ENCODE measurements at regions of chr6 and their contacts with region 1.

Region 1: DNA sequence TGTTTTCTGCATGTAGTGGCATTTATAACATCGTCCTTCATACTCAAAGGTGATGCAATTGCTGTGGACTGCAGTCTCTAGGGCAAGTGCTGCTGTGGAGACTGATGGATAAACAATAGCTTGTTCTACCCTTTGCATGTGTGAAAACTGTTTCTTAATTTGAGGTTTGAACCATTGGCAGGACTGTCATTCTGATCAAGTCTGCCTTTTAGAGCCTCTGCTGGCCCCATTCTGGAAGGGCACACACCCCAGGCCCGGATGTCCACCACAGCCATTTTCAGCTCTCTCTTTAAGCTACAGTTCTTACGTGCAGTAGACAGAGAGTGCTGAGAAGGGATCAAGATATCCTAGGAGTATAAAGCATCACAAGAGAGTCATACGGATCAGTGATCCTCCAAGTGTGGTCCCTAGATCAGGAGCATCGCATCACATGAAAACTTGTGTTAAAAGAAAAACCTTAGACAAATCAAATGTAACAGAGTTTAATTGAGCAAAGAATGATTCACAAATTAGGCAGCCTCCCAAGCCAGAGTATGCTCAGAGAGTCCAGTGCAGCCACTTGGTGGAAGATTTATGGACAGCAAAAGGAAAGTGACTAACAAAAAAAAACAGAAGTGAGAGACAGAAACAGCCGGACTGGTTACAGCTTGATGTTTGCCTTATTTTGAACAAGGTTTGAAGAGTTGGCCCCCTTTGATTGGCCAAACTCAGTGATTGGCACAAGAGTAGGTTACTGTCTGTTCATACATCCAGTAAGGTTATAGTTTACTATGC is 52.0 kb downstream of the FRK start:
- DNase-seq: no peak
- ATAC-seq: peak; percentile 45
- H3K4me3 ChIP-seq: no peak overlapping the region
- H3K27ac ChIP-seq: peak overlapping the region in 1 of 4 donors; percentile 27
- H3K4me1 ChIP-seq: peaks cover 18% of the 10 kb centered on the region
- H3K27me3 ChIP-seq: no peaks in the 10 kb centered on the region
- CTCF ChIP-seq: no peak
- POLR2A ChIP-seq: no peak

Region 2: GRCh38 chr6:115945306-115945705 is 63.4 kb before region 1 on chr6:
- intact Hi-C with region 1: no loop called
- DNase-seq: no peak
- ATAC-seq: no peak
- H3K4me3 ChIP-seq: no peak overlapping the region
- H3K27ac ChIP-seq: no peak overlapping the region
- H3K4me1 ChIP-seq: no peaks in the 10 kb centered on the region
- H3K27me3 ChIP-seq: no peaks in the 10 kb centered on the region
- CTCF ChIP-seq: no peak
- POLR2A ChIP-seq: no peak

Region 3: GRCh38 chr6:116096979-116097816 is 88.5 kb after region 1 on chr6:
- intact Hi-C with region 1: loop called (anchors 5 kb)
- DNase-seq: no peak
- ATAC-seq: no peak
- H3K4me3 ChIP-seq: no peak overlapping the region
- H3K27ac ChIP-seq: no peak overlapping the region
- H3K4me1 ChIP-seq: peaks cover 22% of the 10 kb centered on the region
- H3K27me3 ChIP-seq: no peaks in the 10 kb centered on the region
- CTCF ChIP-seq: peak; percentile 18 to 63 (median 53)
- POLR2A ChIP-seq: no peak

Region 4: GRCh38 chr6:116557869-116558473 is 549.3 kb after region 1 on chr6:
- intact Hi-C with region 1: no loop called
- DNase-seq: peak in 1 of 4 donors; percentile 14
- ATAC-seq: no peak
- H3K4me3 ChIP-seq: no peak overlapping the region
- H3K27ac ChIP-seq: no peak overlapping the region
- H3K4me1 ChIP-seq: no peaks in the 10 kb centered on the region
- H3K27me3 ChIP-seq: no peaks in the 10 kb centered on the region
- CTCF ChIP-seq: no peak
- POLR2A ChIP-seq: no peak

Measured in body of pancreas (tissue), 4 donors.